ENCODE measurements at regions of chr1 and their contacts with region 1.

Region 1: DNA sequence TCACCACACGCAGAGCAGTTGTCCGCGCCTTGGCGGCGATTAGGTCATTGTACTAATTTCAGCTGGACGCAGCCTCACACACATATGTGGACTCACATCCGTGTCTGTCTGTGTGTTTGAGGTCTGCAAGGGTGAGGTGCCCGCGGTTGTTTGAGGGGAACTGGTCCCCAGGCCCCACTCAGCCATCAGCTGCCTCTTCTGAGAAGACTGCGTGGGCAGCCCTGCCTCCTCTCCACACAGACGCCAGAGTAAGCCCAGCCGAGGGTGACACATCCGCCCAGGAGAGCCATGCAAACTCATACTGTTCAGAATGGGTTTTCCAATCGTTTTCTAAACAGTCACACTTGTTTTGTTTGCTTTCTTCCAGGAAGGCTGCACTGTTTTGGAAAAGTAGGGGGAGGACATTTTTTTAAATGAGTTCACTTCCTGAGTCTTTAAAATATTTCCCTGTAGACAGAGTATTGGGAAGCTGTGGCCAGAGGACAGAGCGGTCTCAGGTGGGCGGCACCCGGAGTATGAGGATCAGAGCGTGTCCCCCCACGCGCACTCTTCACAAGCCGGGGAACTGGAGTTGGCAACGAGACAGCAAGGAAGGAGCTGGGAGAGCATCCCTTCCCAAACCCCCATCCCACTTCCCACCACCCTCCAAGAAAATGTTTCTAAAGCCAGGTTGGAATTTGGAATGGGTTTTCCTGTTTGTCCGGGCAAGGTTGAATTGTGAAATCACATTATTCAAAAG is 53.3 kb downstream of the TOMM20 start:
- DNase-seq: peak; percentile 91
- ATAC-seq: peak; percentile 47
- H3K4me3 ChIP-seq: peak overlapping the region; percentile 39
- H3K27ac ChIP-seq: peak overlapping the region; percentile 100
- H3K4me1 ChIP-seq: peaks cover 81% of the 10 kb centered on the region
- H3K27me3 ChIP-seq: no peaks in the 10 kb centered on the region
- CTCF ChIP-seq: no peak

Region 2: DNA sequence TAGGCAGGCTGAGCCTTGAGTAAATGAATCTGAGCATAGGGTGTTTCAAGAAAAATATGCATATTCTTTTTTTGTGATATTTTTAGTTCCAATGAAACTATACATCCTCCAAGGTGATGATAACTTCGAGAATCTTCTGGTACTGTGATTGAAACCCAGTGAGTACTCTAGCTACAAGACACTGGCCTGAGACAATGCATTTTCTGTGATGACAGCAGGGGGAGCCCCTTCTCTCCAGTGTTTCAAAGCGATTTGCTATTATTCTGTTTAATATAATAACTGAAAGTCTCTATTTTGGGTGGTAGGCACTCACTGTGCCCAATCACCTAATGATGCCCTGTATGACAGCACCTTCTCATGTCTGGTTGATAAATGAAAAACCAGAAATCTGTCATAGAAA is 477.5 kb before region 1 on chr1:
- CTCF ChIA-PET with region 1: no interaction called
- POLR2A ChIA-PET with region 1: no interaction called
- intact Hi-C with region 1: loop called (anchors 2 kb)
- DNase-seq: peak; percentile 58
- ATAC-seq: no peak
- H3K4me3 ChIP-seq: no peak overlapping the region
- H3K27ac ChIP-seq: no peak overlapping the region
- H3K4me1 ChIP-seq: peaks cover 39% of the 10 kb centered on the region
- H3K27me3 ChIP-seq: no peaks in the 10 kb centered on the region
- CTCF ChIP-seq: peak; percentile 72

Region 3: GRCh38 chr1:234848972-234849649 is 226.2 kb before region 1 on chr1:
- CTCF ChIA-PET with region 1: no interaction called
- POLR2A ChIA-PET with region 1: no interaction called
- intact Hi-C with region 1: loop called (anchors 5 kb)
- DNase-seq: peak; percentile 83
- ATAC-seq: peak; percentile 68
- H3K4me3 ChIP-seq: no peak overlapping the region
- H3K27ac ChIP-seq: peak overlapping the region; percentile 94
- H3K4me1 ChIP-seq: peaks cover 38% of the 10 kb centered on the region
- H3K27me3 ChIP-seq: no peaks in the 10 kb centered on the region
- CTCF ChIP-seq: no peak

Region 4: DNA sequence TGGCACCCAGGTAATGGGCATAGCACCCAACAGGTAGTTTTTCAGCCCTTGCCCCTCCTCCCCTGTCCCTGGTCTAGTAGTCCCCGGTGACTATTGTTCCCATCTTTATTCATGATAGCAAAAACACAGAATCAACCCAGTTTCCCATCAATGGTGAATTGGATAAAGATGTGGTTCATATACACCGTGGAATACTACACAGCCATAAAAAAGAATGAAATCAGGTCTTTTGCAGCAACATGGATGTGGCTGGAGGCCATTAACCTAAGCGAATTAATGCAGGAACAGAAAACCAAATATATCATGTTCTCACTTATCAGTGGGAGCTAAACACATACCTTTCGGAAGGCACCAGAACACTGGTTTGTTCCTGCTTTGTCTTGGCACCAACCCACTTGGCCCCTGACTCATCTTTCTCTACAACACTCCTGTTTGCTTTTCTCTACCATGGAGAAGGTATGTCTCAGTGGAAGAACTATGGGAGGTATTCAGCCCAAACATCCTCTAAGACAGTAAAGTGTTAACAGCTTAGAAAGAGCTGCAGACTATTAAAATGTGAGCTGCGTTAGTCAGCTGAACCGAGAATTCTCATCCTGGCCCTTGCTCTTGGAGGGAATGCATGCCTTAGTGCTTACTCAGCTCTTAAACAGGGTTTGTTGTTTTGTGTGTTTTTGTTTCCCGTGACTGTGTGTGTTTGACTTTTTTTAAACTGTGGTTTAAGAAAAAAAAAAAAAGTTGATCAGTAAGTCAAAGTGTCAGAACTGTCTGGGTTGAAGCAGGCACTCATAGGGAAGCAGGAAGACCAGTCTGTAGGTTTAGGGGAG is 149.7 kb before region 1 on chr1:
- CTCF ChIA-PET with region 1: no interaction called
- POLR2A ChIA-PET with region 1: interaction called, 3 read pairs
- intact Hi-C with region 1: loop called (anchors 2 kb)
- DNase-seq: peak; percentile 96
- ATAC-seq: peak; percentile 97
- H3K4me3 ChIP-seq: no peak overlapping the region
- H3K27ac ChIP-seq: peak overlapping the region; percentile 92
- H3K4me1 ChIP-seq: peaks cover 26% of the 10 kb centered on the region
- H3K27me3 ChIP-seq: no peaks in the 10 kb centered on the region
- CTCF ChIP-seq: no peak

Region 5: DNA sequence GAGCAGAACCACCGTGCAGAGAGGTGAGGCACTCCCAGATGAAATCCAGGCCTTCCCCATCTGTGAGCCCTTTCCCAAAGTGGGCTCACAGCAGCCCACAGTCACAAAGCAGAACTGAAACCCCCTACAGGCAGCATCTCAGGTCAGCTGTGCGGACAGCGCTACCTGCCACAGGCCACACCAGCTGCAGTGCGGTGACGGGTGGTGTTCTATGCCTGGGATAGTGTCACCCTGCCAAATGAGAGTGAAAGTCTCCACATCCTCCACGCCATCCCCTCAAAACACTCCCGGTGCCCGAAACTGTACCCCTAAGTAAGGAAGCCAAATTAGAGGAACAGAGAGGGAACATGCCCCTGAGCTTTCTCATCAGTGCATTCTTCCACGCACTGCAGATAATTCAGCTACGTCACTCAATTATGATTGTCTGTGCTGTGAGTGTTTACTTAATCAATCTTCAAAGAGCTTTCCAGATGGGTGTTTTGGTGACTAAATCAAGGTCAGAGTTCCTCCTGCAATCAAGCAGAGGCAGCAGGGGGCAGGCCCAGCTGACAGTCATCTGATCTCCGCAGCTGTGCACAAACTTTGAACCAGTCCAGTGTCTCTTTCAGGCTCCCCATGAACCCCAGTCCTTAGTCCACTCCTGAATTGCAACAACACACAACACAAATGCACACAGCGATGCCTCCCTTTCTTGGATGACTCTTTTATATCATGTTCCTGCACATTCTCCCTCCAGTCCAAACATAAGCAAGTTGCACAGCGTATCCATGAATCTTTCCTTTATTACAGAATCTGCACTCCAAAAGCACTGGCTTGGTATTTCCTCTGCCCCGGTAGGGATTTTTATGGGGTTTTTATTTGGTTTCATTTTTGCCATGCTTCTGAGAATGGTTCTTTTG is 96.7 kb before region 1 on chr1:
- CTCF ChIA-PET with region 1: interaction called, 3 read pairs
- POLR2A ChIA-PET with region 1: interaction called, 13 read pairs
- intact Hi-C with region 1: loop called (anchors 1 kb)
- DNase-seq: peak; percentile 60
- ATAC-seq: peak; percentile 27
- H3K4me3 ChIP-seq: no peak overlapping the region
- H3K27ac ChIP-seq: peak overlapping the region; percentile 100
- H3K4me1 ChIP-seq: peaks cover 74% of the 10 kb centered on the region
- H3K27me3 ChIP-seq: no peaks in the 10 kb centered on the region
- CTCF ChIP-seq: no peak

Measured in PC-3 (cell line).